Activated B cell treated with CpG ODN at 0.5 μM for 24 hours (primary cell): ENCODE measurements at regions of chr11 and their contacts with region 1.

Region 1: GRCh38 chr11:65569973-65570918 is at the start of gene ZNRD2:
- DNase-seq: peak; percentile 93
- ATAC-seq: peak; percentile 68
- H3K4me3 Mint-ChIP-seq: peak within 1 kb of the TSS; percentile 99
- H3K27ac Mint-ChIP-seq: peak within 1 kb of the TSS; percentile 99
- H3K4me1 Mint-ChIP-seq: peaks cover 78% of the 10 kb centered on the region
- H3K27me3 Mint-ChIP-seq: no peaks in the 10 kb centered on the region
- CTCF ChIP-seq: no peak
- total RNA-seq, gene ZNRD2: 40.9 and 41.0 TPM in 2 replicates

Region 2: DNA sequence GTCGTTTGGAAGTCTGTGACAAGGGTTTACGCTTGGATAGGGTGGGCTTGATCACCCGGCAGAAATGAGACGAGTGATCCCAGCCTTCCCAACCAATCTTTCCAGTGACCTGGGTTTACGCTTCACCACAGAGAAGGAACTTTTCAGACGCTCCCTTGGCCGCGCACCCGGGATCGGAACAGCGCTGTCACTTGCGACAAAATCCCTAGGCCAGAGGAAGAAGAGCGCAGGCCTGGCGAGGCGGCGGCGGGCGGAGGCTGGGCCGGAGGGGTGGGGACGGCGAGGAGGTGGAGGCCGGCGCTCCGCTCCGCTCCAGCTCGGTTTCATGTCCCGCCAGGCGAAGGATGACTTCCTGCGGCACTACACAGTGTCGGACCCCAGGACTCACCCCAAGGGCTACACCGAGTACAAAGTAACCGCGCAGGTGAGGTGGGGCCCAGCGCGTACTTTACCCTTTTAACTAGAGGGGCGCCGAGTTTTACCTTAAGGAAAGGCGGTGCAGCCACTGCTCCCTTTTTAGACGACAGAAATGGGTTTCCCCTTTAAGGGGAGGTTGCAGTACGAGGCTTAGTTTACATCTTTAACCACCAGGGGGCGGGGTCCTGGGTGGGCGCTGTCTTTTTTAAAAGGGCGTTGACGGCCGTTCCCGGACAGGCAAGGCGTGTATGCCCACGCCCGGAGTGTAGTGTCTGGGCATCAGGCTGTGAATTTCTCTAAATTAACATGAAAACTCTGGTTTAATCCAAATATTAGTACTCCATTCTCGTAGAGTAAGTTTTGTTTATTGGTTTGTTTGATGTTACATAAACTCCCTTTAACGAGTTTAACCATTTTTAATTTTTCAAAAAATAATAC is 542.8 kb before region 1 on chr11 and contains the start of gene SNX15:
- CTCF ChIA-PET with region 1: no interaction called
- POLR2A ChIA-PET with region 1: no interaction called
- intact Hi-C with region 1: loop called (anchors 5 kb)
- DNase-seq: peak; percentile 72
- ATAC-seq: peak; percentile 90
- H3K4me3 Mint-ChIP-seq: peak within 1 kb of the TSS; percentile 85
- H3K27ac Mint-ChIP-seq: peak within 1 kb of the TSS; percentile 88
- H3K4me1 Mint-ChIP-seq: peaks cover 21% of the 10 kb centered on the region
- H3K27me3 Mint-ChIP-seq: no peaks in the 10 kb centered on the region
- CTCF ChIP-seq: no peak
- total RNA-seq, gene SNX15: 17.3 and 19.3 TPM in 2 replicates

Region 3: DNA sequence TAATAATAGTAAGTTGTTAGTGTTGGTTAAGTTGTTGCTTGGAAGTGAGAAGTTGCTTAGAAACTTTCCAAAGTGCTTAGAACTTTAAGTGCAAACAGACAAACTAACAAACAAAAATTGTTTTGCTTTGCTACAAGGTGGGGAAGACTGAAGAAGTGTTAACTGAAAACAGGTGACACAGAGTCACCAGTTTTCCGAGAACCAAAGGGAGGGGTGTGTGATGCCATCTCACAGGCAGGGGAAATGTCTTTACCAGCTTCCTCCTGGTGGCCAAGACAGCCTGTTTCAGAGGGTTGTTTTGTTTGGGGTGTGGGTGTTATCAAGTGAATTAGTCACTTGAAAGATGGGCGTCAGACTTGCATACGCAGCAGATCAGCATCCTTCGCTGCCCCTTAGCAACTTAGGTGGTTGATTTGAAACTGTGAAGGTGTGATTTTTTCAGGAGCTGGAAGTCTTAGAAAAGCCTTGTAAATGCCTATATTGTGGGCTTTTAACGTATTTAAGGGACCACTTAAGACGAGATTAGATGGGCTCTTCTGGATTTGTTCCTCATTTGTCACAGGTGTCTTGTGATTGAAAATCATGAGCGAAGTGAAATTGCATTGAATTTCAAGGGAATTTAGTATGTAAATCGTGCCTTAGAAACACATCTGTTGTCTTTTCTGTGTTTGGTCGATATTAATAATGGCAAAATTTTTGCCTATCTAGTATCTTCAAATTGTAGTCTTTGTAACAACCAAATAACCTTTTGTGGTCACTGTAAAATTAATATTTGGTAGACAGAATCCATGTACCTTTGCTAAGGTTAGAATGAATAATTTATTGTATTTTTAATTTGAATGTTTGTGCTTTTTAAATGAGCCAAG is 144.9 kb before region 1 on chr11:
- CTCF ChIA-PET with region 1: no interaction called
- POLR2A ChIA-PET with region 1: interaction called, 10 read pairs
- intact Hi-C with region 1: no loop called
- DNase-seq: no peak
- ATAC-seq: peak; percentile 38
- H3K4me3 Mint-ChIP-seq: peak overlapping the region; percentile 100
- H3K27ac Mint-ChIP-seq: peak overlapping the region; percentile 100
- H3K4me1 Mint-ChIP-seq: peaks cover 78% of the 10 kb centered on the region
- H3K27me3 Mint-ChIP-seq: no peaks in the 10 kb centered on the region
- CTCF ChIP-seq: no peak

Region 4: DNA sequence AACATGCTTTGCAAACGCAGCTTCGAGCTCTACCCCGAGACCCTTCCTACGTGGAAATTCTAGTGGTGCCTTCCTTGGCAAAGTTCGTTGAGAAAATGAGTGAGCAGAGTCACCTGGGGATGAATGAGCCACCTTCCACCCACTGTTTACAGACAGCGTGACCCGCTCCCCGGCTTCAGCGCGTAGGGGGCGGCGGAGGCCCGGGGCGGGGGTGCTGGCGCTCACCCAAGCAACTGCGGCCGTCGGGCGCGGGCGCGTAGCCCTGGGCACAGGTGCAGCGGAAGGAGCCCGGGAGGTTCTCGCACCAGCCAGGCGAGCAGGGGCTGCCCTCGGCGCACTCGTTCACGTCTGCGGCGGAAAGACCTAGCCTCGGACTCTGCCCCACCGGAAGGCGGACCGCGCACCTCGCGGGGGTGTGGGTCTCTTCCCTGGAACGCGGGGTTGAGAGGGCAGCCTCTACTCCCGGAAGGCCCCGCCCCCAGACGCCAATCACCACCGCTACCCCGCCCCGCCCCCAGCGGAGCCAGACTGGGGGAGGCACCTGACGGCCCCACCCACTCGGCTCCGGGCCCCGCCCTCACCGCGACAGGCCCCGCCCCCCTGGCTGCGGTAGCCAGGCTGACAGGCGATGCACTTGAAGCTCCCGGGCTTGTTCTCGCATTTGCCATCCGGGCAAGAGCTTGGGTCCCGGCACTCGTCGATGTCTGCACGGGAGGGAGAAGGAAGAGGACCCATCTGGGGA is 23.9 kb before region 1 on chr11:
- CTCF ChIA-PET with region 1: interaction called, 40 read pairs
- POLR2A ChIA-PET with region 1: interaction called, 34 read pairs
- intact Hi-C with region 1: loop called (anchors 1 kb)
- DNase-seq: peak; percentile 99
- ATAC-seq: peak; percentile 89
- H3K4me3 Mint-ChIP-seq: peak overlapping the region; percentile 85
- H3K27ac Mint-ChIP-seq: peak overlapping the region; percentile 89
- H3K4me1 Mint-ChIP-seq: peaks cover 54% of the 10 kb centered on the region
- H3K27me3 Mint-ChIP-seq: no peaks in the 10 kb centered on the region
- CTCF ChIP-seq: no peak

Region 5: GRCh38 chr11:65588199-65589054 is 18.2 kb after region 1 on chr11:
- CTCF ChIA-PET with region 1: interaction called, 67 read pairs
- POLR2A ChIA-PET with region 1: interaction called, 239 read pairs
- intact Hi-C with region 1: loop called (anchors 1 kb)
- DNase-seq: peak; percentile 76
- ATAC-seq: peak; percentile 80
- H3K4me3 Mint-ChIP-seq: peak overlapping the region; percentile 70
- H3K27ac Mint-ChIP-seq: peak overlapping the region; percentile 96
- H3K4me1 Mint-ChIP-seq: peaks cover 44% of the 10 kb centered on the region
- H3K27me3 Mint-ChIP-seq: no peaks in the 10 kb centered on the region
- CTCF ChIP-seq: peak; percentile 38

Region 6: DNA sequence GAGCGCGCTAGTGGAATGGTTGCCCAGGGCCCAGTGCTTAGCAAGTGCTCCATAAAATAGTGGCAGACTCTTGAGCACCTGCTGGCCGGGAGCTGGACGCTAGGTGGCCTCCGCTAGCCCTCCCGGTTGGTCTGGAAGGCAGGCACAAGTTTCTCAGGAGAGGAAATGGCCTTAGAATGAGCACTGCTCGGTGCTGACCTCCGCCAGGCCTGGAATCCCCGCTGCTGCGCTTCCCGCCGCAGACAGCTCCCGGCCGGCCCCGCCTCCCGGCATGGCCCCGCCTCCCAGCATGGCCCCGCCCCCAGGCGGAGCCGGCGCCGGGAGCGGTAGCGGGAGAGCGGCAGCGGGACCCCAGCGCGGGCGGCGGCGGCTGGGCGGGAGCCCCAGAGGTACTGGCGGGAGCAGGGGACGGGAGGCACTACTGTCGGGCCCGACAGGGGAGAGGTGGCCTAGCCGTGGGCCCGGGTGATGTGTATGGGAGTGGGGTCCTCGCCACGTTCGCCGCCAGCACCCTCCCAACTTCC is 67.6 kb after region 1 on chr11 and contains the start of gene SIPA1:
- CTCF ChIA-PET with region 1: interaction called, 5 read pairs
- POLR2A ChIA-PET with region 1: interaction called, 39 read pairs
- intact Hi-C with region 1: loop called (anchors 1 kb)
- DNase-seq: peak; percentile 86
- ATAC-seq: peak; percentile 35
- H3K4me3 Mint-ChIP-seq: peak within 1 kb of the TSS; percentile 94
- H3K27ac Mint-ChIP-seq: peak within 1 kb of the TSS; percentile 96
- H3K4me1 Mint-ChIP-seq: peaks cover 51% of the 10 kb centered on the region
- H3K27me3 Mint-ChIP-seq: no peaks in the 10 kb centered on the region
- CTCF ChIP-seq: no peak
- total RNA-seq, gene SIPA1: 236 and 252 TPM in 2 replicates